Common myeloid progenitor, CD34-positive (primary cell): ENCODE measurements at regions of chr15 and their contacts with region 1.

Region 1: GRCh38 chr15:40893733-40894688 is at the start of gene VPS18:
- DNase-seq: peak; percentile 97 to 98 (median 98)
- H3K4me3 ChIP-seq: peak within 1 kb of the TSS; percentile 82 to 98 (median 89)
- H3K27ac ChIP-seq: peak within 1 kb of the TSS; percentile 75 to 85
- H3K4me1 ChIP-seq: peaks cover 7 to 31% (median 25%) of the 10 kb centered on the region in 4 experiments
- H3K27me3 ChIP-seq: peaks cover 0 to 2% (median 0%) of the 10 kb centered on the region in 5 experiments

Region 2: GRCh38 chr15:40716165-40716564 is 177.8 kb before region 1 on chr15:
- CTCF ChIA-PET with region 1: no interaction called
- POLR2A ChIA-PET with region 1: no interaction called
- DNase-seq: peak in 2 of 3 donors; percentile 40 to 46
- H3K4me3 ChIP-seq: no peak overlapping the region
- H3K27ac ChIP-seq: no peak overlapping the region
- H3K4me1 ChIP-seq: no peaks in the 10 kb centered on the region
- H3K27me3 ChIP-seq: no peaks in the 10 kb centered on the region

Region 3: DNA sequence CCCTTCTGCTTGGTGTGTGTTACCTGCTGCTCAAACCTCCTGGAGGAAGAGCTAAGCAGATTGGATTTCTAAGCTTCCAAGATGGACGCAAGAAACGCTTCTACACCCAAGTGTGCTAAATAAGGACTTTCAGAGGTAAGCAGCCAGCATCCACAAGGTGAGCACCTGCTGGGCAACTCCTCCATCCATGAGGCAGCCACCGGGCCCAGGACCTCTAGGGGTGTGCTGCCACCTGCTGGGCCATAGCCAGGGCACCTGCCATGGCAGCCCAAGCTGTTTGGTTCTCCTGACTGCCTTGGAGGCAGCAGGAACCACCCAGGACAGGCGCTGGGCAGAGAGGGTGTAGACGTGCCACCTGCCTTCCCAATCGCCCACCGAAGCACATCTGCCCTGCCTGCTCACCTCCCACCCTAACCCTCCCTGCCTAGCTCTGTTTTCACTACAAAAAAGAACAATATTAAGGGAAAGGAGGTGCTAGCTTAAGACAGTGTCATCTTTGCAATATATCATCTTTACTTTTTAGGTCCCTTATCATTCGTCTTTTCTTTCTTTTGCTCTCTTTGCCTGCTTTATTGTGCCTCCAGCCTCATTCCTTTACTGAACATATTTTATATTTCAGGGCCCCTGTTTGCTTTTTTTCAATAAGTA is 111.3 kb before region 1 on chr15:
- CTCF ChIA-PET with region 1: interaction called, 10 read pairs
- POLR2A ChIA-PET with region 1: no interaction called
- DNase-seq: peak; percentile 65 to 81 (median 79)
- H3K4me3 ChIP-seq: no peak overlapping the region
- H3K27ac ChIP-seq: no peak overlapping the region
- H3K4me1 ChIP-seq: peaks cover 7 to 18% (median 11%) of the 10 kb centered on the region in 4 experiments
- H3K27me3 ChIP-seq: no peaks in the 10 kb centered on the region

Region 4: GRCh38 chr15:40873625-40874561 is 20.1 kb before region 1 on chr15 and contains the start of gene RHOV:
- CTCF ChIA-PET with region 1: interaction called, 41 read pairs
- POLR2A ChIA-PET with region 1: no interaction called
- DNase-seq: peak; percentile 57 to 72 (median 63)
- H3K4me3 ChIP-seq: peak within 1 kb of the TSS; percentile 37 to 77 (median 62)
- H3K27ac ChIP-seq: no peak within 1 kb of the TSS
- H3K4me1 ChIP-seq: peaks cover 0 to 18% (median 13%) of the 10 kb centered on the region in 4 experiments
- H3K27me3 ChIP-seq: peaks cover 0 to 3% (median 0%) of the 10 kb centered on the region in 5 experiments

Region 5: GRCh38 chr15:40928821-40929659 is 35.0 kb after region 1 on chr15 and contains the start of gene DLL4:
- CTCF ChIA-PET with region 1: interaction called, 13 read pairs
- POLR2A ChIA-PET with region 1: no interaction called
- DNase-seq: peak in 2 of 3 donors; percentile 56 to 67
- H3K4me3 ChIP-seq: peak within 1 kb of the TSS in 6 of 7 experiments; percentile 38 to 70 (median 56)
- H3K27ac ChIP-seq: no peak within 1 kb of the TSS
- H3K4me1 ChIP-seq: peaks cover 8 to 78% (median 75%) of the 10 kb centered on the region in 4 experiments
- H3K27me3 ChIP-seq: peaks cover 3 to 83% (median 35%) of the 10 kb centered on the region in 5 experiments

Region 6: DNA sequence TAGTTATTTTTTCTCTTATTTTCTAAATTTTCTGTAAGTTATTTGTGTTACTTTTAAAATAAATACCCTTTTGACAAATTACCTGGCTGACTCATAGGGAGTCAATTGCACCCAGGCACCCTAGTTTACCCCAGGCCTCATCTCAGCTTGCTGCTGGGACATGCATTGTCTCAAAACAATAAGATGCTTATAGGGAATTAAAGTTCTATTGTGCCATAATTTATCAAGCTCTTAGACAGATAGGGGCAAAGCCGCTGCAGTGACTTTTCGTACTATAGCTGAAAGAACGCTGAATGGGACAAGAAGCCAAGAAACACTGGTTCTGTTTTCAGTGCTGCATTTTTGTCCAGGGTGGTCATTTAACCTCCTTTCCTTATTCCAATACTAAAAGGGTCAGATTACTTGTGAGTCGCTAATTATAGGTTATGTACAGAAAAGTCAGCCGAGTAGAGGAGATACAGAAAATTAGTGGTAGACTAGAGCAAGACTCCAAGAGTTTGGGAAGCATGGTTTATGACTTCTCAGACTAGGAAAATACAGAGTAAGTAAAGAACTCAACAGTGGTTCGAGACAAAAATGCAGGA is 286.3 kb after region 1 on chr15:
- CTCF ChIA-PET with region 1: interaction called, 16 read pairs
- POLR2A ChIA-PET with region 1: no interaction called
- DNase-seq: no peak
- H3K4me3 ChIP-seq: no peak overlapping the region
- H3K27ac ChIP-seq: no peak overlapping the region
- H3K4me1 ChIP-seq: peaks cover 0 to 4% (median 0%) of the 10 kb centered on the region in 4 experiments
- H3K27me3 ChIP-seq: no peaks in the 10 kb centered on the region

Region 7: DNA sequence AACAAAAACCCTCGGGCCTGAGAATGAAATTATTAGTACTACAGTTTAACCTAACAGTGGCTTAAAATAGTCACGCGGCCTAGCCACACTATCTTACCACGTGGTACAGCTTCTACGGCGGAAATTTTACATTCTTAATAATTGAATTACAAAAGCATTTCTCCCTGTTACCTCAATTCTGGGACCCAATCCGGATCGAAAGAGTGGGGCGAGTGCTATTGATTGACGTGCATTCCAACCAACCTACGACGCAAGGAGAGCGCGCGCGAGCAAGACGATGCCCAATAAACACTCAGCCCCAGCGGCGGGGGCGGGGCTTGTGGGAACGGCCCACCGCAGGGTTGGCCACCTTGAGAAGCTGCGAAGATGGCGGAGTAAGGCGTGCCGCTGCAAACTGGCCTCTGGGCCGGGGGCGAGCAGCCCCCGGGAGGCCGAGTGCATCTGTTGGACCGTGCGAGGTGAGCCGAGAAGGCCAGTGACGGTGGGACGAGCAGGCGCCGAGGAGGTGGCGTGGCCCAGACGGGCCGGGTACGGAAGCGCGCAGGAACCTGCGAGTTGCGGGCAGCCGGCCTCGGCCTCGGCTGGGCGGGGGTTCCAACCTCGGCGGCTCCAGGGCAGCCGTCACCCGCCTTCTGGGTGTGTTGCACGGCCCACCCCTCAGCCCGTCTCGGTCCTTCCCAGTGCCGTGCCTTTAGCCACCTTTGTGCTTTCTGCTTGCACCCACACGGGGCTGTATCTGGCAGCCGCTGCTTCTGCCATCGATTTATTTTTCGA is 389.8 kb after region 1 on chr15:
- CTCF ChIA-PET with region 1: no interaction called
- POLR2A ChIA-PET with region 1: no interaction called
- DNase-seq: peak; percentile 100
- H3K4me3 ChIP-seq: peak overlapping the region; percentile 93 to 100 (median 99)
- H3K27ac ChIP-seq: peak overlapping the region; percentile 84 to 92
- H3K4me1 ChIP-seq: peaks cover 10 to 24% (median 15%) of the 10 kb centered on the region in 4 experiments
- H3K27me3 ChIP-seq: no peaks in the 10 kb centered on the region